WTC11 (cell line): ENCODE measurements at regions of chr19 and their contacts with region 1.

Region 1: GRCh38 chr19:50556282-50557008 is 11.8 kb downstream of the LRRC4B start:
- DNase-seq: peak; percentile 98
- ATAC-seq: peak; percentile 86
- H3K4me3 Mint-ChIP-seq: peak overlapping the region; percentile 99
- H3K27ac Mint-ChIP-seq: peak overlapping the region; percentile 88; the same call in 1 of the 2 replicates
- H3K4me1 Mint-ChIP-seq: peaks cover 12% of the 10 kb centered on the region
- H3K27me3 Mint-ChIP-seq: peaks cover 68% of the 10 kb centered on the region
- CTCF ChIP-seq: peak; percentile 97

Region 2: DNA sequence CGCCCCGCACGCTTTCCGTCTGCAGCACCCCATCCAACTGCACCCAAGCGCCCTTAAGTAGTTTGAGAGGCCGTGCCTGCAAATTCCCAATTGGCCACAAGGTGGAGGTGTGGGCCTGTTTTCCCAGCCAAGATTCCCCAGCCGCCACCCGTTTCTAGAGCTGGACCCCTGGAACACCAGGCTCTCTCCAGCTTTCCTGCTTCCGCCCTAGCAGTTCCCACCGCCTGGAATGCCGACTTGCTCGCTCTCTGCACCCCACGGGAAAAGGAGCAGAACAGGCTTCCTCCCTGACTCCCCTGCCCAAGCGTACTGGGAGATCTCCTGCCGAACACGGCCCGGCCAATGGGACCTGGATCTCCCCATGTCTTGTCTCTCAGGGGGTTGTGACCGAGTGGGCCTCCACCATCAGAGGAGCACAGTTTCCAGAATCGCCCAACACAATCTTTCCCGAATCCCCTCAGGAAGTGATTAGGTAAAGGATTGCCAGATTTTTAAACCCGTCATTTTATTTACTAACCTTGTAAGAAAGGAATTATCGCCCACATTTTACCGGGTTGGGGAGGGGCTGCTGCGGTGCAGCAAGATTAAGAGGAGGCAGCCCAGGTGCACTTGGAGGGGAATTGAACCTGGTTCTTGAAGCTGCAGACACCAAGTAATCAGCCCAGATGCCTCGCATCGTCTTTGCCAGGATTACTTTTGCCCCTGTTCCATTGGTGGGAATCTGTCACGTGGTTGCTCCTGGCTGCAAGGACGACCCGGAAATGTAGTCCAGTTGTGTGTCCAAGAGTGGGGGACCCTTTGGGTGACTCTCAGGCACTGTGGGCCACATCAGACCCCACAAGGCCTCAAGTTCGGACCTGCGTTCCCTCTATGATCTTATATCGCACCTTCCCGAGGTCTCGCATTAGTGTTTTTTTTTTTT is 187.5 kb before region 1 on chr19:
- CTCF ChIA-PET with region 1: interaction called, 13 read pairs
- POLR2A ChIA-PET with region 1: no interaction called
- DNase-seq: peak; percentile 92
- ATAC-seq: peak; percentile 86
- H3K4me3 Mint-ChIP-seq: peak overlapping the region; percentile 88
- H3K27ac Mint-ChIP-seq: peak overlapping the region; percentile 96
- H3K4me1 Mint-ChIP-seq: peaks cover 2% of the 10 kb centered on the region; the same call in 1 of the 2 replicates
- H3K27me3 Mint-ChIP-seq: peaks cover 5% of the 10 kb centered on the region
- CTCF ChIP-seq: peak; percentile 83

Region 3: DNA sequence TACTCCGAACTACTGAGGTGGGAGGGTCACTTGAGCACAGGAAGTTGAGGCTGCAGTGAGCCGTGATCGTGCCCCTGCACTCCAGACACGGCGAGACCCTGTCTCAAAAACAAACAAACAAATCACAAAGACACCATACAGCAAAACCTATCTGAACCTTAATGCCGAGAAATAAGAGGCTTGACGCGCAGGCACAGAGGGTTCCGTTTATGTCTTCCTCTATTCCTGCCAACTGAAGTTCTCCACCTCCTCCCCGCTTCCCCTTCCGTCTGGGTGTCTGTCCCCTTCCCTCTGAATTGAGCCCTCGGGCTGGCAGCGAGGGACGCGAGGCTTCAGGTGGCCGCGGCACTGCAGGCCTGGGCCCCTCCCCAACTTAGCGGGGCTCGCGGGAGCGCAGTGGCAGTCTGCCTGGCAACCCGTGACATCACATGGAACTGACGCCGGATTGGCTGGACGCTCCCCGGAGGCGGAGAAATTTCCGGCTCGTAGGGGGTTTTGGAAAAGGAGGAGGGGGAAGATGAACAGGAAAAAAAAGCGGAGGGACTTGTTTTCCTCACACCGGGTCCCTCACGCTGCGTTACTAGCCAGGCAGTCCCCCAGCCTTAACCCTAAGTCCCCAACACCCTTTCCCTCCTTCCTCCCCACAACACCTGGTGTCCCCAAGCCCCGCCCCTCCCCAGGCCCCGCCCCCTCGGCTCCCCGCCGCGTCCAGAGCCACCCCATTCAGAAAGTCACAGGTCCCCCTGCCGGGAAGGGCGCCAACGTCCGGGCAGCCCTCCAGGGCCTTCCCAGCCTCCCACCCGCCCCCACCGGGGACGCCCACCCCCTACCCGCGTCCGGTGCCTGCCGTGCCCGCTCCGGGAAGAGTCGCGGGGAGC is 124.9 kb before region 1 on chr19:
- CTCF ChIA-PET with region 1: no interaction called
- POLR2A ChIA-PET with region 1: no interaction called
- DNase-seq: peak; percentile 93
- ATAC-seq: peak; percentile 87
- H3K4me3 Mint-ChIP-seq: peak overlapping the region; percentile 78
- H3K27ac Mint-ChIP-seq: peak overlapping the region; percentile 72; the same call in 1 of the 2 replicates
- H3K4me1 Mint-ChIP-seq: peaks cover 31% of the 10 kb centered on the region
- H3K27me3 Mint-ChIP-seq: peaks cover 40% of the 10 kb centered on the region
- CTCF ChIP-seq: no peak

Region 4: DNA sequence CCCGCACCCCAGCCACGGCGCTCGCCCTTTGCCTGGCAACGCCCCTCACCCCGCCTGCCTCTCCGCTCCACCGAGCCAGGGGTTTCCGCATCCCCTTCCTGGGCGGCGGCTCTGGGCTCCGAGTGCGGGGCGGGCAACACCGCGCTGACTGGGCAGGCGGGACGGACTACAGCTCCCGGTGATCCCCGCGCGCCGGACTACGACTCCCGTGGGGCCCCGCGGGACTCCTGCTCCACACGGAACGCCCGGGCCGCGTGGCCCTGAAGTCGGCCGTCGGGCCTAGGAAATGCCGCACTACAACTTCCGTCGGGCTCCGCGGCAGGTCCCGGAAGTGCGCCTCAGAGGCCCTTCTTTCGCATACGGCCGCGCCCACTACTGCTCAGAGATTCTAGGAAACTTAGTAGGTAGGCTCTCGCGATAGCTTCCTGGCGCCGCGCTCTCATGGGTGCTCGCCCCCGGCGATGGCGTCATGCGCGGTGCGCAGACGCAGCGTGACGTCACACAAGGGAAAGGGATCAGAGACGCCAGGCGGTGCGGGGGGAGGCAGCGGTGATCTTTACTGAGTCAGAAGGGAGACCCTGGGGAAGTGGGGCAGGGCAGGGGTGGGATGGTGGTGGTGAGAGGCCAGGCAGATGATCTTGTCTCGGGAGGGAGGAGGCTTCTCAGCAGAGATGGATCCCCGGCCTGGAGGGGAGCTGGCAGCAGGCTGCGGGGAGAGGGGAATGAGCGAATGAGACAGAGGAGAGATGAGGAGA is 45.2 kb before region 1 on chr19 and contains the start of gene JOSD2:
- CTCF ChIA-PET with region 1: interaction called, 22 read pairs
- POLR2A ChIA-PET with region 1: interaction called, 4 read pairs
- DNase-seq: peak; percentile 96
- ATAC-seq: peak; percentile 89
- H3K4me3 Mint-ChIP-seq: peak within 1 kb of the TSS; percentile 82
- H3K27ac Mint-ChIP-seq: peak within 1 kb of the TSS; percentile 95
- H3K4me1 Mint-ChIP-seq: peaks cover 14% of the 10 kb centered on the region
- H3K27me3 Mint-ChIP-seq: peaks cover 45% of the 10 kb centered on the region
- CTCF ChIP-seq: no peak
- total RNA-seq, gene JOSD2: 4.0 to 4.3 TPM (median 4.0 TPM) in 3 replicates

Region 5: GRCh38 chr19:50537762-50538230 is 18.6 kb before region 1 on chr19:
- CTCF ChIA-PET with region 1: interaction called, 200 read pairs
- POLR2A ChIA-PET with region 1: interaction called, 5 read pairs
- DNase-seq: peak; percentile 98
- ATAC-seq: peak; percentile 97
- H3K4me3 Mint-ChIP-seq: no peak overlapping the region
- H3K27ac Mint-ChIP-seq: no peak overlapping the region
- H3K4me1 Mint-ChIP-seq: 0 out of 2 replicates have a peak, but pooled peaks cover 3% of the 10 kb centered on the region
- H3K27me3 Mint-ChIP-seq: peaks cover 8% of the 10 kb centered on the region
- CTCF ChIP-seq: peak; percentile 88

Region 6: DNA sequence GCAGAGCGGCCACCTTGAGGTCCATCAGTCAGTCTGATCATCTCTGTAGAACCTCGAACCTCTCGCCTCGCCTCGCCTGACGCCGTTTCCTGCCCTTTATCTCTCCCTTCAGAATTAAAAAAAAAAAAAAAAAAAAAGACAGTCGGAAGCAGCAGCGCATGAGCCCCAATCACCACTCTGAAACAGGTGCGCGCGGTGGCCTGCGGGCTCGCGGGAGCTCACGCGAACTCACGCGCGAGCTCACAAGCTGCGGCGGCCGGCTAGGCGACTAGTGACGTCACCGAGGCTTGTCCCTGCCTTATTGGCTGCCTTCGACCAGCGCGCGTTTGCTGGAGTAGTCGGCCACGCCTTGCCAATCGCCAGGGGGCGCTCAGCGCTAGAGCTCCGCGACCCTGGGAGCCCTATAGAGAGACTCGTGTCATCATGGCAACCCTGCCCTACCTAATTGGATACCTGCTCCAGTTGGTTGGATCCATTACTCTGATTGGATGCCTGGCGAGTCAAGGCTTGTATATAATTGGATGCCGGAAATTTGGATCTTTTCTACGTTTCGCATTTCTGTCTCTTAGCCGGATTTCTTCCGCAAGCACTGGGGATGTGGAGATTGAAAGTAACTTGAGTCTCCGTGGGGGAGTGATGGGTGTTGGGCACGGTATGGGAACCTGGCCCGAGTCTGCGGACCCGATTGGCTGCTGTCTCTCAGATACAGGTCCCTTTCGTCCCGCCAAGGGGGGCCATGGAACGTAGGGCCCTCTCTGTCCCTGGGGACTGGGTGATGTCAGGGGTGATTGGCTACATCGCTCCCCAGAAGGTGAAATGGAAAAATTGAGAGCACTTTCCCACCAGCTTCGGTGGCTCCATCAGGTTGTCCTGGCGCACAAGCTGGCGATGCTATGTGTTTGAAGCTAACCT is 51.7 kb after region 1 on chr19:
- CTCF ChIA-PET with region 1: interaction called, 26 read pairs
- POLR2A ChIA-PET with region 1: no interaction called
- DNase-seq: peak; percentile 100
- ATAC-seq: peak; percentile 84
- H3K4me3 Mint-ChIP-seq: peak overlapping the region; percentile 62
- H3K27ac Mint-ChIP-seq: peak overlapping the region; percentile 83
- H3K4me1 Mint-ChIP-seq: peaks cover 12% of the 10 kb centered on the region; the same call in 1 of the 2 replicates
- H3K27me3 Mint-ChIP-seq: peaks cover 74% of the 10 kb centered on the region
- CTCF ChIP-seq: peak; percentile 66

Region 7: DNA sequence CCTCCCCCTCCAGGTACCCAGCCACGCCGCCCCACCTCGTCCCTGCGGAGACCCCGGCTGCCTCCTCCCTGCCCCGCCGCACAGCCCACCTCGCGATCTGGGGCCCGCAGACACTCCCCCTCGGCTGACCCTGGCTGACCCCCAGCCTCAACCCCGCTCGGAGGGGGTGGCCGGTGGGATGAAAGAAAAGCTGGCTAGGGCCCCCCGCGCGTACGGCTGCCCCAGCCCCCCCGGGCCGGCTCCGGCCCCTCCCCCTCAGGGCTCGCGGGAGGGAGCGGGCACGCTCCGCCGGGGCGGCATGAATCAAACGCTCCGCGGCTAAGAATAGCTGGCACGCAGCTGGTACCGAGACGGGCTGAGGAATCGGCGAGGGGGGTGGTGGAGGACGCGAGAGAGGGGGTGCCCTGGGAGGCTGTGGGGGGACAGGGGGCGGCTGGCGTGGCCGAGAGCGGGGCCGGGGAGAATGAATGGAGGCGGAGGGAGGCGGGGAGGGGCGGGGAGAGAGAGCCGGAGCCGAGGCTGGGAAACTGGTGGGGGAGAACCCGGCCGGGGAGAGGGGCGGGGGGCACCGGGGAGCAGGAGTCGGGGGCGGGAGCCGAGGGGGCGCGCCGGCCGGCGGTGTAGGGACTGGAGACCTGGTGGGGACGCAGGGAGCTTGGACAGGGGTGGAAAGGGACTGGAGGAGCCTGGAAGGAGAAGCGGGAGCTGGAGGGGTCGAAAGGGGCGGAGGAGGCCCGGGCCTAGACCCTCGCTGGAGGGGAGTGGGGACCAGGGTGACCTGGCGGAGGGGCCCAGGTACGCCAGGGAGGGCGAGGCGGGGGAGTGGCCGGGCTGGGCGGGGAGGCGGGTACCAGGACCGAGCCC is 162.0 kb after region 1 on chr19:
- CTCF ChIA-PET with region 1: interaction called, 15 read pairs
- POLR2A ChIA-PET with region 1: no interaction called
- DNase-seq: no peak
- ATAC-seq: peak; percentile 24
- H3K4me3 Mint-ChIP-seq: peak overlapping the region; percentile 64
- H3K27ac Mint-ChIP-seq: no peak overlapping the region
- H3K4me1 Mint-ChIP-seq: peaks cover 41% of the 10 kb centered on the region
- H3K27me3 Mint-ChIP-seq: peaks cover 52% of the 10 kb centered on the region
- CTCF ChIP-seq: no peak